ENCODE measurements at regions of chr12 and their contacts with region 1.

Region 1: GRCh38 chr12:121536899-121537813 is 43.7 kb downstream of the KDM2B start:
- DNase-seq: peak; percentile 82 to 91 (median 89)
- H3K4me3 ChIP-seq: peak overlapping the region; percentile 54
- H3K27ac ChIP-seq: peak overlapping the region; percentile 78 to 83
- H3K4me1 ChIP-seq: peaks cover 20% of the 10 kb centered on the region
- H3K27me3 ChIP-seq: no peaks in the 10 kb centered on the region
- CTCF ChIP-seq: no peak
- EP300 ChIP-seq: no peak
- POLR2A ChIP-seq: peak; percentile 52

Region 2: GRCh38 chr12:121579981-121580868 is 43.1 kb after region 1 on chr12:
- intact Hi-C with region 1: loop called in 1 of 4 experiments (anchors 2 kb)
- DNase-seq: peak; percentile 65 to 81 (median 76)
- H3K4me3 ChIP-seq: peak overlapping the region; percentile 43
- H3K27ac ChIP-seq: peak overlapping the region; percentile 56 to 84
- H3K4me1 ChIP-seq: peaks cover 13% of the 10 kb centered on the region
- H3K27me3 ChIP-seq: no peaks in the 10 kb centered on the region
- CTCF ChIP-seq: no peak
- EP300 ChIP-seq: no peak
- POLR2A ChIP-seq: no peak

Measured in ovary (tissue), 10 donors.